OCI-LY7 (cell line): ENCODE measurements at regions of chr7 and their contacts with region 1.

Region 1: DNA sequence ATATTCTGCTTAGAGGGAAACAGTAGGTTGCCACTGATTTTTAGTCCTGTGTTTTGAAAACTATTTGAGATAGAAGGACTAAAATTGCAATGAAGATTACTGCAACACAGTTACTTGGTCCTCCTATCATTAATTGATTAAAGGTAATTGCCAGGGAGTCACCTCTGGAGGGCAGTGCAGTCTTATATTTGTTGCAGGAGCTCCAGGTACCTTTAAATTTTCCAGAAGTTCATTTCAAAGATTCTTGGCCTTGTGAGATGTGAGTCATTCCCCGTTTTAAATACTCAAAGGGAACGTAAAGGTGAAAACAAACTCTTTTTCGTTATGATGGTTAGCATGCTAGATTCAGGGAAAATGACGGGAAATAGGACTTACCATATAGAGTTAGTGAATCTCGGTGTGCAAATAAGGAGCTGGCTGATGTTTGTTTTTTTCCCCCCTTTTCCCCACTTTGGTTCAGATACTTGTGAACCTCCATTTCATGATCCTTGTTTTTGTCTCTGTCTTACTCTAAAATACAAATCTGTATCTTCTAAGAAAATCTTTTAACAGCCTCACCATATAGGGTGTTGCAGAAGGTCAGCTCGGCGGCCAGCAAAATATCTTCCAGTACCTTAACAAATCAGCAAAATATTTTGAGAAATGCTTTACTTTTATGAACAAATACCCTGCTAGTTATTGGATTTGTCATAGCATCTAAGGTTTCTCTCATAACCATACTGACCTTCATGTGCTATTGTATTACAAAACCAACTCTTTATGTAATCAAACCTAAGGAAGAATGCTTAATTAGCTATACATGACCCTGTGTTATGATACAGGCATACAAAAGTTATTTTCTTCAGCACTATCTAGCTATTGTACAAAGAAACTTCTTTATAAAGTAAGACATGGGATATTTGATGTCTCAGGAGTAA is 143.0 kb upstream of the HDAC9 start:
- DNase-seq: peak; percentile 66
- H3K4me3 ChIP-seq: no peak overlapping the region
- H3K27ac ChIP-seq: no peak overlapping the region
- H3K4me1 ChIP-seq: peaks cover 9% of the 10 kb centered on the region
- CTCF ChIP-seq: peak; percentile 98

Region 2: DNA sequence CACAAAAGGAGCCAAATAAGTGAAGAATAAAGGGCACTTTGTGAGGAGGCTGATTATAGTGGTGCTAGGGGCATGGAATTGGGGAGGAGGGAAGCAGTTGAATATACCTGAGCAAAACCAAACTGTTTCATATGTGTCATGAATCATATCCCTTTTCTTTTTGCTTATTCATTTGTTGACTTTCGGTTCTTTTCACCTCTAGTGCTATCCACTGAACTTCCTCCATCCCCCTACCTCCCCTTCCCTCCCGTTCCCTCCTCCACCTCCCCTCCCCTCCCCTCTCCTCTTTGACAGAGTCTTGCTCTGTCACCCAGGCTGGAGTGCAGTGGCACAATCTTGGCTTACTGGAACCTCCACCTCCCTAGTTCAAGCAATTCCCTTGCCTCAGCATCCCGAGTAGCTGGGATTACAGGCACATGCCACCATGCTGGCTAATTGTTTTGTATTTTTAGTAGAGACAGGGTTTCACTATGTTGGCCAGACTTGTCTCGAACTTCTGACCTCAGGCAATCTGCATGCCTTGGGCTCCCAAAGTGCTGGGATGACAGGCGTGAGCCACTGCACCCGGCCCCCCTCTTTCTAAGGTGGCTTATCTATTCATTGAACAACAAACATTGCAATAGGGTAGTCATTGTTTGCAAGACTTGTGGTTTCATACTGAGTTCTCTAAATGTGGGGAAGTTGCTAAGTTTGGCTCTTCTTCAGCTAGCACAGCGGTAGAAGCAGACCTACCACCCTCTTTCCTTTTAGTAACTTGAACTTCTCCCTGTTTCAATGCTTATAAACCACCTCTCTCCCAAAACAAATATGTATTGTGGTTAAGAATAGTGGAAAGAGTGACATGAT is 174.6 kb before region 1 on chr7:
- CTCF ChIA-PET with region 1: no interaction called
- POLR2A ChIA-PET with region 1: no interaction called
- intact Hi-C with region 1: no loop called
- DNase-seq: no peak
- H3K4me3 ChIP-seq: no peak overlapping the region
- H3K27ac ChIP-seq: no peak overlapping the region
- H3K4me1 ChIP-seq: no peaks in the 10 kb centered on the region
- CTCF ChIP-seq: no peak

Region 3: GRCh38 chr7:18614841-18615240 is 262.2 kb after region 1 on chr7:
- CTCF ChIA-PET with region 1: no interaction called
- POLR2A ChIA-PET with region 1: no interaction called
- intact Hi-C with region 1: loop called (anchors 5 kb)
- DNase-seq: no peak
- H3K4me3 ChIP-seq: no peak overlapping the region
- H3K27ac ChIP-seq: no peak overlapping the region
- H3K4me1 ChIP-seq: no peaks in the 10 kb centered on the region
- CTCF ChIP-seq: no peak

Region 4: GRCh38 chr7:18666107-18666728 is 313.6 kb after region 1 on chr7:
- CTCF ChIA-PET with region 1: interaction called, 11 read pairs
- POLR2A ChIA-PET with region 1: interaction called, 3 read pairs
- intact Hi-C with region 1: loop called (anchors 1 kb)
- DNase-seq: peak; percentile 85
- H3K4me3 ChIP-seq: no peak overlapping the region
- H3K27ac ChIP-seq: no peak overlapping the region
- H3K4me1 ChIP-seq: peaks cover 11% of the 10 kb centered on the region
- CTCF ChIP-seq: peak; percentile 100

Region 5: GRCh38 chr7:19051767-19052375 is 699.3 kb after region 1 on chr7:
- CTCF ChIA-PET with region 1: interaction called, 3 read pairs
- POLR2A ChIA-PET with region 1: no interaction called
- intact Hi-C with region 1: loop called (anchors 1 kb)
- DNase-seq: peak; percentile 50
- H3K4me3 ChIP-seq: no peak overlapping the region
- H3K27ac ChIP-seq: no peak overlapping the region
- H3K4me1 ChIP-seq: no peaks in the 10 kb centered on the region
- CTCF ChIP-seq: peak; percentile 79

Region 6: DNA sequence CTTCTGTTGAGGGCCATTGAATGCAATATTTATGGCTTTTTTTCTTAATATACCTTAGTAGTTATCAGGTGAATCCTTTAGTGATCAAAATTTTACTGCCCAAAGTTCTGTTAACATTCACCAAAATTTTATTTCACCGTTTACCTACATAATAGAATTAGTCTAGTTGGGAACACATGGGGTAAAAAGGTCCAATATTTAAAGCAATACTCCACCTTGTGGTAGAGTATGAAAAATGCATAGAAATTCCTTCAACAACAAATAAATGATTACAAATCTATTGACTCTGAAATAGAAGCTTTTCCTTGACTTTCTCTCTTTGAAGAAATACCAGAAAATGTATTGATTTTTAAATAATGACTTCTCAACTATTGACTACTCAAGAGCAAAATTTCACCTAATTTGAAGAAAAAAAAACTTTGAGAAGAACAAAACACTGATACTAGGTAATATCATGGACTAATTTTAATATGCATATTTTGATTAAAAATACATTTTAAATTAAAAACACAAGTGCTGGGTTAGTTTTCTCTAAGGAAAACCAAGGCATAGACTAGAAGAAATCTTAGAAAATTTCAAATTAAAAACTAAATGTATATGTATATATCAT is 1312.9 kb after region 1 on chr7:
- CTCF ChIA-PET with region 1: no interaction called
- POLR2A ChIA-PET with region 1: no interaction called
- intact Hi-C with region 1: loop called (anchors 2 kb)
- DNase-seq: peak; percentile 34
- H3K4me3 ChIP-seq: no peak overlapping the region
- H3K27ac ChIP-seq: no peak overlapping the region
- H3K4me1 ChIP-seq: no peaks in the 10 kb centered on the region
- CTCF ChIP-seq: peak; percentile 89